ENCODE measurements at regions of chr15 and their contacts with region 1.

Region 1: GRCh38 chr15:39720621-39721611 is 61.7 kb downstream of the FSIP1 start:
- DNase-seq: peak; percentile 39 to 84
- H3K4me3 ChIP-seq: no peak overlapping the region
- H3K27ac ChIP-seq: peak overlapping the region; percentile 38
- H3K4me1 ChIP-seq: peaks cover 19% of the 10 kb centered on the region
- H3K27me3 ChIP-seq: no peaks in the 10 kb centered on the region
- CTCF ChIP-seq: no peak

Region 2: GRCh38 chr15:38490242-38490922 is 1230.5 kb before region 1 on chr15:
- CTCF ChIA-PET with region 1: no interaction called
- POLR2A ChIA-PET with region 1: no interaction called
- intact Hi-C with region 1: no loop called
- DNase-seq: no peak
- H3K4me3 ChIP-seq: no peak overlapping the region
- H3K27ac ChIP-seq: no peak overlapping the region
- H3K4me1 ChIP-seq: no peaks in the 10 kb centered on the region
- H3K27me3 ChIP-seq: no peaks in the 10 kb centered on the region
- CTCF ChIP-seq: no peak

Region 3: GRCh38 chr15:39624806-39625205 is 96.1 kb before region 1 on chr15:
- CTCF ChIA-PET with region 1: no interaction called
- POLR2A ChIA-PET with region 1: no interaction called
- intact Hi-C with region 1: no loop called
- DNase-seq: peak; percentile 49 to 57
- H3K4me3 ChIP-seq: no peak overlapping the region
- H3K27ac ChIP-seq: peak overlapping the region; percentile 45
- H3K4me1 ChIP-seq: peaks cover 12% of the 10 kb centered on the region
- H3K27me3 ChIP-seq: no peaks in the 10 kb centered on the region
- CTCF ChIP-seq: no peak

Region 4: GRCh38 chr15:39686000-39686613 is 34.8 kb before region 1 on chr15:
- CTCF ChIA-PET with region 1: no interaction called
- POLR2A ChIA-PET with region 1: no interaction called
- intact Hi-C with region 1: loop called (anchors 5 kb)
- DNase-seq: peak in 1 of 2 experiments; percentile 34
- H3K4me3 ChIP-seq: no peak overlapping the region
- H3K27ac ChIP-seq: no peak overlapping the region
- H3K4me1 ChIP-seq: no peaks in the 10 kb centered on the region
- H3K27me3 ChIP-seq: no peaks in the 10 kb centered on the region
- CTCF ChIP-seq: peak; percentile 82

Region 5: GRCh38 chr15:39744334-39745103 is 23.6 kb after region 1 on chr15:
- CTCF ChIA-PET with region 1: no interaction called
- POLR2A ChIA-PET with region 1: interaction called, 4 read pairs
- intact Hi-C with region 1: loop called (anchors 2 kb)
- DNase-seq: no peak
- H3K4me3 ChIP-seq: no peak overlapping the region
- H3K27ac ChIP-seq: 0 out of 2 replicates have a peak overlapping the region, but pooled peaks have one; percentile 32
- H3K4me1 ChIP-seq: peaks cover 33% of the 10 kb centered on the region
- H3K27me3 ChIP-seq: no peaks in the 10 kb centered on the region
- CTCF ChIP-seq: no peak

Region 6: DNA sequence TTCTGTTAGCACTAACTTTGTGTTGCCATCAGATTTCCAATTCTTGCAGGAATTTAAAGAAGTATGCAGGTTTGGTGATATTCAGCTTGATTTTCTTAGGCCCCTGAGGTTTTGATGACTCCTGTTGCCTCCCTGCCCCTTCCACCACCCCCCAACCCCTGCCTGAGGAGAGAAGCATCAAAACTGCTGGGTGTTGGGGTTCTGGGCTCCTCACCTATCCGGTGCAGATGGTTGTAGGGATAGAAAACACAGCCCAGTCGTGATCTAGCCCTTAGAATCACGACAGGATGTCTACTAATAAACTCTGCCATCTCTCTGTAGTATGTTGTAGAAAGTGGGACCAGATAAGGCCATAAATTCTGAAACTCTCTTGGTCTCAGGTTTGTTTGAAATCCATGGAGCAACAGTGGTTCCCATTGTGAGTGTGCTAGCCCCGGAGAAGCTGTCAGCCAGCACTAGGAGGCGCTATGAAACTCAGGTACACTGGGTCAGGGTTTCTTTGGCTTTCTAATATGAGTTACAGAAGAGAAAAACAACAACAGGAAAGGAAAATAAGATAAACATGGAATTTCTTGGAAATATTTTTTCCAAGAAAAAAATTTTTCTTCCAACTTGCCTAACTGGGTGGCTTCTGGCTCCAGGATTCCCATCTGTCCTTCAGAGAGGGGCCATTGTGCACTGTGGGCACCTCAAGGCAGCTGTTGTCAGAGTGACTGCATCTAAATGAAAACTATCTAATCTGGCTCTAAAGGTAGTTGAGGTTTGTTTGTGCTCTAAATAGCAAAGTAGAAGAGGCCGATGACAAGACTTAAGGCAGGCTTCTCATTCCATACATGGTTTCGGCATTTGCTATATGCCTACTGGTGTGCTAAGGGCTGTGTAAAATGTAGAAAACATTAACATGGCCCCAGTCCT is 309.3 kb after region 1 on chr15:
- CTCF ChIA-PET with region 1: no interaction called
- POLR2A ChIA-PET with region 1: no interaction called
- intact Hi-C with region 1: no loop called
- DNase-seq: no peak
- H3K4me3 ChIP-seq: no peak overlapping the region
- H3K27ac ChIP-seq: no peak overlapping the region
- H3K4me1 ChIP-seq: no peaks in the 10 kb centered on the region
- H3K27me3 ChIP-seq: no peaks in the 10 kb centered on the region
- CTCF ChIP-seq: peak; percentile 51; the same call in 1 of the 2 replicates

Measured in PC-9 (cell line).